ENCODE measurements at regions of chr15 and their contacts with region 1.

Region 1: GRCh38 chr15:42920519-42921227 is at the start of gene TTBK2:
- DNase-seq: peak; percentile 99
- H3K4me3 ChIP-seq: peak within 1 kb of the TSS; percentile 94
- H3K27ac ChIP-seq: peak within 1 kb of the TSS; percentile 66
- H3K4me1 ChIP-seq: no peaks in the 10 kb centered on the region
- H3K27me3 ChIP-seq: no peaks in the 10 kb centered on the region
- CTCF ChIP-seq: no peak
- total RNA-seq, gene TTBK2: 6.8 to 9.1 TPM

Region 2: GRCh38 chr15:42736793-42737528 is 183.7 kb before region 1 on chr15 and contains the start of gene CDAN1:
- intact Hi-C with region 1: loop called (anchors 2 kb)
- DNase-seq: peak; percentile 93
- H3K4me3 ChIP-seq: peak within 1 kb of the TSS; percentile 99
- H3K27ac ChIP-seq: peak within 1 kb of the TSS; percentile 75
- H3K4me1 ChIP-seq: peaks cover 5% of the 10 kb centered on the region
- H3K27me3 ChIP-seq: no peaks in the 10 kb centered on the region
- CTCF ChIP-seq: no peak
- total RNA-seq, gene CDAN1: 11.0 to 31.6 TPM

Region 3: DNA sequence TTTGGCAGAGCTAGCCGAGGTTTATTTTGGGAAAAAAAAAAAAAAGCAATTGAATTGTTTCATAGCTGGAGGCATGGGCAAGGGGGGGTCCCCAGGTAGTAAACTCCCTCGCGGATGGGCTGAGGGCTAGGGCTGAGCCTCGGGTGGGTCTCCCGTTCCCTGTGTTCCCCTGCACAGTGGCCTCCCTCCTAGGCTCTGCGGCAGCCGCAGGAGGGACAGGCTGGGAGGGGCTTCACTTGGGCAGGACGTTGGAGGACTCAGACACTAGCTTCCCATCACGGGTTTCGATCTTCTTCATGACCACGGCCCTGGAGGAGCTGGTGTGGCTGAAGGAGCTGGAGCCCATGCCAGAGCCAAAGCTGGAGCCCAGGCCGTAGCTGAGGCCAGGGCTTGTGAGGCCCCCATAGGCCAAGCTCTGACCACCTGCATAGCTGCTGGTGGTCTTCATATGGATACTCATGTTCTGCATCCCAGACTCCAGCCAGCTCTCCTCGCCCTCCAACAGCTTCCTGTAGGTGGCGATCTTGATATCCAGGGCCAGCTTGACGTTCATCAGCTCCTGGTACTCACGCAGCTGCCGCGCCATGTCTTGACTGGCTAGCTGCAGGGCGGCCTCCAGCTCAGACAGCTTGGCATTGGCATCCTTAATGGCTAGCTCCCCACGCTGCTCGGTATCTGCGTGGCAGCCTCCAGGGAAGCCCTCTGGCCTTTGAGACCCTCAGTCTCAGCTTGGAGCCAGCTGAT is 119.8 kb before region 1 on chr15:
- intact Hi-C with region 1: loop called (anchors 10 kb)
- DNase-seq: no peak
- H3K4me3 ChIP-seq: no peak overlapping the region
- H3K27ac ChIP-seq: no peak overlapping the region
- H3K4me1 ChIP-seq: no peaks in the 10 kb centered on the region
- H3K27me3 ChIP-seq: no peaks in the 10 kb centered on the region
- CTCF ChIP-seq: no peak